SK-N-SH (cell line): ENCODE measurements at regions of chr4 and their contacts with region 1.

Region 1: GRCh38 chr4:80103629-80104028 is 30.6 kb upstream of the ANTXR2 start:
- DNase-seq: no peak
- H3K4me3 ChIP-seq: no peak overlapping the region
- H3K27ac ChIP-seq: no peak overlapping the region
- H3K4me1 ChIP-seq: peaks cover 0 to 11% of the 10 kb centered on the region in 2 experiments; a peak in 2 of 4 replicates
- H3K27me3 ChIP-seq: no peaks in the 10 kb centered on the region
- CTCF ChIP-seq: no peak
- EP300 ChIP-seq: no peak
- RAD21 ChIP-seq: no peak

Region 2: GRCh38 chr4:80125252-80126177 is 21.9 kb after region 1 on chr4:
- CTCF ChIA-PET with region 1: interaction called, 11 read pairs
- POLR2A ChIA-PET with region 1: no interaction called
- DNase-seq: no peak
- H3K4me3 ChIP-seq: no peak overlapping the region
- H3K27ac ChIP-seq: peak overlapping the region in 1 of 2 experiments; percentile 16; a peak in 1 of 4 replicates
- H3K4me1 ChIP-seq: peaks cover 0 to 17% of the 10 kb centered on the region in 2 experiments; a peak in 2 of 4 replicates
- H3K27me3 ChIP-seq: no peaks in the 10 kb centered on the region
- CTCF ChIP-seq: peak; percentile 70
- EP300 ChIP-seq: no peak
- RAD21 ChIP-seq: peak; percentile 67